Activated B cell treated with CpG ODN at 0.5 μM for 24 hours (primary cell): ENCODE measurements at regions of chr1 and their contacts with region 1.

Region 1: DNA sequence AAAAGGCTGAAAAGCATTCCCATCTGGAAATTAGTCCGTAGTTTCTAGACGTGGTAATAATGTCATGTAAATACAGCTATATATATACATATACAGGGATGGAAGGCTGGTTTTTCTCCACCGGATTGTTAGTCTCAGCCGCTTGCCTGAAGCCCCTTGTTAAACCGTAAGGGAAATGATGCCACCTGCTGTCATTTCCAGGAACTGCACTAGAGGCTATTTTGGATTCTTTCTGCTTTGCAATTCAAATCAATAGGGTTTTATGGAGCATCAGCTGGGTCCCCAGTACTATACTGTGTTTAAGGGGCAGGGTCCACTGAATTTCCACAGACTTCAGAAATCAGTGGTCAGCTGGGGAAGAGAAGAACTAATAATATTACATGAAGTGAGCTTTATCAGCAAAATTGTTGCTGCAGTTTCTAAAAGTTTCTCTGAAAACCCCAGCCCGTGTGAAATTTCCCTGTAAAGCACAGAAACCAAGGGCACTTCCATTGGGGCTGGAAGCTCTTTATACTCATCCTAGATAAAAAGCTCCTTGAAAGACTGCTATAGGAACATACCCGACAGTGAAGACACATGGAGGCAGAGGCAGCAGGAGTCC is 33.8 kb upstream of the MPZL1 start:
- DNase-seq: no peak
- ATAC-seq: peak; percentile 83
- H3K4me3 Mint-ChIP-seq: no peak overlapping the region
- H3K27ac Mint-ChIP-seq: peak overlapping the region; percentile 46
- H3K4me1 Mint-ChIP-seq: peaks cover 45% of the 10 kb centered on the region
- H3K27me3 Mint-ChIP-seq: no peaks in the 10 kb centered on the region
- CTCF ChIP-seq: peak; percentile 81

Region 2: DNA sequence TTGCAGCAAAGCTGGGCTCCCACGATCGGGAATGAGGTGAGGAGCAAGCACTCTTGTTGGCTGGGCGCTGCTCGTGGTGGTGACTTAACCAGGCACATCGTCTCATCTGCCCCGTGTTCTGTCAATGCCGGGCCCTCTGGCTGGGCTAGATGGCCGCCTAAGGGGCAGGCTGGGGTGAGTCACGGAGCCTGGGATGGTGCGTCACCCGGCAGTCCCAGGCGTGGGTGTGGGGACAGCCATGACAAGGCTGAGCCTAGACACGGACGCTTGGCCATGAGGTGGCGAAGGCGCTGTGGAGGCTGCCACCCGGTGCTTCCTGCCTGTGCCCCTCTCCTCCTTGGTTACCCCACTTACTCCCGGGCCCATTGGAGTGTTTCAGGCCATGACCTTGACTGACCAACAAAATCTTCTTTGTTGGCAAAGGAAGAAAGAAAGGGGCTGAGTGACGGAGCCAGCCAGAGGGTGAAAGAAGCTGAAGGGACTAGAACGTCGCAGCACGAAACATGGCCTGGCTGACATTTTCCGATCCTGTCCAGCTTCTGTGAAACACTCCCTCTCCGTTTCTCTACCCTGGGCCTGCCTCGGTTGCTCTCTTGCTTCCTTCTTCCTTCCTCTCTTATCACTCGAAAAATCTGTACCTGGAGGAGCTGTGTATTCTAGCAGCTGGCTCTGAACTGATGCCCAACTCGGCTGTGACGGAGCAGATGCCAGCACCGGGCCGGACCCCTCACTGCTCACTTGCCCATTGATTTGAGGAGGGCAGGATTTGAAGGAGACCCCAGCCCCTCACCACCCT is 170.3 kb before region 1 on chr1:
- CTCF ChIA-PET with region 1: no interaction called
- POLR2A ChIA-PET with region 1: no interaction called
- intact Hi-C with region 1: no loop called
- DNase-seq: no peak
- ATAC-seq: no peak
- H3K4me3 Mint-ChIP-seq: no peak overlapping the region
- H3K27ac Mint-ChIP-seq: no peak overlapping the region
- H3K4me1 Mint-ChIP-seq: no peaks in the 10 kb centered on the region
- H3K27me3 Mint-ChIP-seq: peaks cover 19% of the 10 kb centered on the region
- CTCF ChIP-seq: no peak

Region 3: GRCh38 chr1:167594822-167595221 is 93.2 kb before region 1 on chr1:
- CTCF ChIA-PET with region 1: interaction called, 197 read pairs
- POLR2A ChIA-PET with region 1: interaction called, 44 read pairs
- intact Hi-C with region 1: loop called (anchors 1 kb)
- DNase-seq: no peak
- ATAC-seq: no peak
- H3K4me3 Mint-ChIP-seq: no peak overlapping the region
- H3K27ac Mint-ChIP-seq: no peak overlapping the region
- H3K4me1 Mint-ChIP-seq: peaks cover 5% of the 10 kb centered on the region
- H3K27me3 Mint-ChIP-seq: no peaks in the 10 kb centered on the region
- CTCF ChIP-seq: no peak

Region 4: DNA sequence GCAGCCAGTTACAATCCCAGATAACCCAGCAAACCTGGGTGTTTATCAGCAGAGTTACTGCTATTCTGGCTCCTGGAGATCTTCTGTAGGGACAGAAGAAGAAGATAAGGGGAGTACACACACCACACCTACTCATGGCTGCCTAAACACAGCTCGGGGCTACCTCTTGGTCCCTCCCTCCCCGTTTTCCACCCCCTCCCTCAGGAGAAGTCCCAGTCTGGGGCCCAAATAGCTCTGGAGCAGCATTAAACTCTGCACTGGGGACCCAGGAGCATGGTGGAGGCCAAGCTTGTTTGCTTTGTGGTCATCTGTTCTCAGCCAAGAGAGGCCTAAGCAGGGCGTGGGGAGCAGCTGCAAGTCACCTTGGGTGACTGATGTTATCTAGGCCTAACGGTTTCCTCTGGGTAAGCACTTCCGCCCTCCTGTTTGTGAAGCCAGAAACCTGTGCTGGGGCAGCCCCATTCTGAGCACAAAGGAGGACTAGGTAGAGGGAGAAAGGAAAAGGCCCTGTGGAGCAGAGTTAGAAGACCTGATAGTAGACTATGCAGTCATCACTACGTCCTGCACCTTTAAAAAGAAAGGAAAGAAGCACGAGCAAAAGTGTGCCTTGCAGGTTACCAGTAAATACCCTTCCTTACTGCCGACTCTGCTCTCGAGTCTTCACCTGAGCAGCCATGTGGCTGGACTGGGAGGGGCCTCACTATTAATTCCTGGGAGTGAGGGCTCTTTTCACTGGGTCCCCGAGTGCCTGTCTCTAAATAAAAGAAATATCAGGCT is 60.0 kb before region 1 on chr1:
- CTCF ChIA-PET with region 1: interaction called, 25 read pairs
- POLR2A ChIA-PET with region 1: interaction called, 12 read pairs
- intact Hi-C with region 1: loop called (anchors 1 kb)
- DNase-seq: peak; percentile 52
- ATAC-seq: peak; percentile 70
- H3K4me3 Mint-ChIP-seq: peak overlapping the region; percentile 94
- H3K27ac Mint-ChIP-seq: peak overlapping the region; percentile 98
- H3K4me1 Mint-ChIP-seq: peaks cover 76% of the 10 kb centered on the region
- H3K27me3 Mint-ChIP-seq: no peaks in the 10 kb centered on the region
- CTCF ChIP-seq: no peak

Region 5: DNA sequence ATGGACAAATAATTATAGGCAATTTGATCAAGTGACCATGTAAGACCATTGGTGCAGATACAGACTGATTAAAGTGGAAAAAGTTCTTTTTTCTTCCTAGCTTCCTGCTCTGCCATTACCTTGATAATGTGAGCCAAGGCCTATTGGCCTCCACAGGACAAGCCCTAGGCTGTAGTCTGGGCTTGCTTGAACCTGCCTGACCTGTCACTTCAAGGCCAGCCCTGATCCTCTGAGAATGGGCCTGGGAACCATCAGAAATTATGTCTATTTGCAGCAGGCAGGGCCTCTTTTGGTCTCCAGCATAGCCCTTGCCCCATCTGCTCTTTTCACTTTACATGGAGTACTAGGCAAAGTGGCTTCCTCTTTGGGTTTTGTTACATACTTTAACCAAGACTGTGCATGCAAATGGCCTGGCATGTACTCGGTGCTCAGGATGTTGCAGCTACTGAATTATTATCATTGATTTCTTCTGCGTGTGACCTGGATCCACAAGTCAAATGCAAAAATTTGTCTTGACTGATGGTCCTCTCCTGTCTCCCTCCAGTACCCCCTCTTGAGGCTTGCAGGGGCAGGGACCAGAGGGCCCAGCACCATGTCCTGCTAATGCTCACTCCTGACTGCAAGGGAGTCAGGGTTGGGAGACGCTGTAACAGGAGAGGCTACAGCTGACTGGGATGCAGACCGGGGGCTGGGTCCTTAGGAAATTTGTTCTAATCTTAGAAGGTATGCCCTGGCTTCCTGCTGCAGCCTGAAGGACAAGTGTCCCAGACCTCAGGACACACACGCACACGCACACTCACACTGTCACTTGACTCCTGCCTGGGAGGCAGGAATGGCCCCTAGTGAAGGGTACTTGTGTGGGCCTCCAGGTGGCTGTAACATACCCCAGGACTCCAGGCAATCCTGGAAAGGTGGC is 18.6 kb before region 1 on chr1:
- CTCF ChIA-PET with region 1: interaction called, 27 read pairs
- POLR2A ChIA-PET with region 1: interaction called, 8 read pairs
- intact Hi-C with region 1: loop called (anchors 2 kb)
- DNase-seq: no peak
- ATAC-seq: peak; percentile 43
- H3K4me3 Mint-ChIP-seq: peak overlapping the region; percentile 49
- H3K27ac Mint-ChIP-seq: peak overlapping the region; percentile 77
- H3K4me1 Mint-ChIP-seq: peaks cover 99% of the 10 kb centered on the region
- H3K27me3 Mint-ChIP-seq: no peaks in the 10 kb centered on the region
- CTCF ChIP-seq: no peak

Region 6: DNA sequence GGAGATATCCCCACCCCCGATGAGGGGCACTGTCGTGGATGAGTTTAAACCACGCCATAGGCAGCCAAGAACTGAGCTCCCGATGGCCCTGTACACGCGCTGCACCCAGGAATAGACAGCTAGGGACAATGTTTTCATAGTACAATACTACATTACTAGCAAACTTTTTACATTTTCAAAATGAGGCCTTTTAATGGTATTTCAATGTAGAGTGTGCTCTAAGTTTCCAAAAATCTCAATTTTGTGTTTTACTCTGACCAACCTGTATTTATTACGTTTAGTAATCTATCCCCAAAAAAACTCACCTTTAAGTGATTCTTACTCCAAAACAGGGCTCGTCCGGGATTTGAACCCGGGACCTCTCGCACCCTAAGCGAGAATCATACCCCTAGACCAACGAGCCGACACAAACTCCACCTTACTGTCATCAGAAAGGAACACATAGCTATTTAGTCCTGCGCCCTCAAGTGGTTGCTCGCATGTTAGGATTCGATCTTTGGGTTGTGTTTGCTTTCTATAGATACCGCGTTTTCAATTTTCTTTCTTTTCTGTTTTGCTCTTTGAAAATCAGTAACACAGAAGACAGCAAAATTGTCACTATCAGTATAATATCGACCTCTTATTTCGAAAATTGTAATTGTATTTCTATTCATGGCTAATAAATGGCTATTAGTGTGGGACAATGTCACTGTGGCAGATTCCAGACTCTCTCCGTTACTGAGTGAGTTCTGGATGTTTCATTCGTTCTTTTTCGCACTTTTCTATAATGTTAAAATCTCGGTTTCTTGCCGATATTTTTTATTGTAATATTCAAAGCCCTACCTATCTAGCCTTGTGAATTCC is 27.4 kb after region 1 on chr1:
- CTCF ChIA-PET with region 1: interaction called, 12 read pairs
- POLR2A ChIA-PET with region 1: interaction called, 6 read pairs
- intact Hi-C with region 1: loop called (anchors 2 kb)
- DNase-seq: peak; percentile 69
- ATAC-seq: peak; percentile 51
- H3K4me3 Mint-ChIP-seq: peak overlapping the region; percentile 85
- H3K27ac Mint-ChIP-seq: peak overlapping the region; percentile 98
- H3K4me1 Mint-ChIP-seq: peaks cover 68% of the 10 kb centered on the region
- H3K27me3 Mint-ChIP-seq: peaks cover 7% of the 10 kb centered on the region
- CTCF ChIP-seq: peak; percentile 68